Activated CD4-positive, alpha-beta T cell treated with anti-CD3 and anti-CD28 coated beads for 36 hours (primary cell): ENCODE measurements at regions of chr12 and their contacts with region 1.

Region 1: GRCh38 chr12:76348079-76348901 is at the start of gene BBS10:
- DNase-seq: peak; percentile 92
- ATAC-seq: peak; percentile 93
- H3K4me3 Mint-ChIP-seq: peak within 1 kb of the TSS; percentile 88
- H3K27ac Mint-ChIP-seq: peak within 1 kb of the TSS; percentile 94
- H3K4me1 Mint-ChIP-seq: peaks cover 21% of the 10 kb centered on the region
- H3K27me3 Mint-ChIP-seq: no peaks in the 10 kb centered on the region
- total RNA-seq, gene BBS10: 3.5 to 4.0 TPM

Region 2: GRCh38 chr12:75480469-75480949 is 867.8 kb before region 1 on chr12 and contains the start of gene GLIPR1:
- CTCF ChIA-PET with region 1: interaction called, 3 read pairs
- POLR2A ChIA-PET with region 1: no interaction called
- intact Hi-C with region 1: loop called (anchors 5 kb)
- DNase-seq: peak; percentile 86
- ATAC-seq: peak; percentile 83
- H3K4me3 Mint-ChIP-seq: peak within 1 kb of the TSS; percentile 93
- H3K27ac Mint-ChIP-seq: peak within 1 kb of the TSS; percentile 89
- H3K4me1 Mint-ChIP-seq: peaks cover 90% of the 10 kb centered on the region
- H3K27me3 Mint-ChIP-seq: no peaks in the 10 kb centered on the region
- total RNA-seq, gene GLIPR1: 8.7 to 9.3 TPM

Region 3: GRCh38 chr12:75977952-75978671 is 370.2 kb before region 1 on chr12:
- CTCF ChIA-PET with region 1: no interaction called
- POLR2A ChIA-PET with region 1: no interaction called
- intact Hi-C with region 1: loop called in 1 of 2 experiments (anchors 1 kb)
- DNase-seq: peak; percentile 85
- ATAC-seq: peak; percentile 80
- H3K4me3 Mint-ChIP-seq: peak overlapping the region; percentile 59
- H3K27ac Mint-ChIP-seq: peak overlapping the region; percentile 100
- H3K4me1 Mint-ChIP-seq: peaks cover 69% of the 10 kb centered on the region
- H3K27me3 Mint-ChIP-seq: no peaks in the 10 kb centered on the region

Region 4: GRCh38 chr12:76183459-76184186 is 164.7 kb before region 1 on chr12:
- CTCF ChIA-PET with region 1: no interaction called
- POLR2A ChIA-PET with region 1: no interaction called
- intact Hi-C with region 1: loop called (anchors 1 kb)
- DNase-seq: peak; percentile 75
- ATAC-seq: peak; percentile 94
- H3K4me3 Mint-ChIP-seq: no peak overlapping the region
- H3K27ac Mint-ChIP-seq: peak overlapping the region; percentile 68
- H3K4me1 Mint-ChIP-seq: peaks cover 12% of the 10 kb centered on the region
- H3K27me3 Mint-ChIP-seq: peaks cover 49% of the 10 kb centered on the region

Region 5: DNA sequence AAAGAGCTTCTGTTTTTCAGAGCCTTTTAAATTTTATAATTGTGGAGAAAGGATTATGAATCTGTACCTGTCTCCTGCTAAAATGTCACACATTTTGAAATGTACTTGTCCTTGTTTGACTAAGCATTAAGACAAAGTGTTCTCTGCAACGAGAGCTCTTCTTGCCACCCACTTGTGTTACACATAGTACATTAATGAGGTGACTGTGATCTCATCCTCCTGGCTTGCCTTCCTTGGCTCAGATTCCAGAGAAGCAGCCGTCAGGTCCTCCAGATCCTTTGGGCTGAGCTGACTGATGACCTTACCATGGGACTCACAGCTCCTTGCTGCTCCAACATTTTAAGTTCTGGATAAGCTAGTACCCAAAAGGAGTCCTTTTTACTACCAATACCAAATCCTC is 81.5 kb before region 1 on chr12:
- CTCF ChIA-PET with region 1: no interaction called
- POLR2A ChIA-PET with region 1: no interaction called
- intact Hi-C with region 1: no loop called
- DNase-seq: no peak
- ATAC-seq: peak; percentile 30
- H3K4me3 Mint-ChIP-seq: no peak overlapping the region
- H3K27ac Mint-ChIP-seq: no peak overlapping the region
- H3K4me1 Mint-ChIP-seq: peaks cover 2% of the 10 kb centered on the region
- H3K27me3 Mint-ChIP-seq: peaks cover 22% of the 10 kb centered on the region

Region 6: GRCh38 chr12:76559400-76560085 is 211.3 kb after region 1 on chr12 and contains the start of gene OSBPL8:
- CTCF ChIA-PET with region 1: no interaction called
- POLR2A ChIA-PET with region 1: interaction called, 4 read pairs
- intact Hi-C with region 1: loop called (anchors 1 to 5 kb)
- DNase-seq: peak; percentile 98
- ATAC-seq: peak; percentile 70
- H3K4me3 Mint-ChIP-seq: peak within 1 kb of the TSS; percentile 86
- H3K27ac Mint-ChIP-seq: peak within 1 kb of the TSS; percentile 98
- H3K4me1 Mint-ChIP-seq: peaks cover 24% of the 10 kb centered on the region
- H3K27me3 Mint-ChIP-seq: no peaks in the 10 kb centered on the region
- total RNA-seq, gene OSBPL8: 70.2 to 78.5 TPM